Calu3 (cell line): ENCODE measurements at regions of chr12 and their contacts with region 1.

Region 1: DNA sequence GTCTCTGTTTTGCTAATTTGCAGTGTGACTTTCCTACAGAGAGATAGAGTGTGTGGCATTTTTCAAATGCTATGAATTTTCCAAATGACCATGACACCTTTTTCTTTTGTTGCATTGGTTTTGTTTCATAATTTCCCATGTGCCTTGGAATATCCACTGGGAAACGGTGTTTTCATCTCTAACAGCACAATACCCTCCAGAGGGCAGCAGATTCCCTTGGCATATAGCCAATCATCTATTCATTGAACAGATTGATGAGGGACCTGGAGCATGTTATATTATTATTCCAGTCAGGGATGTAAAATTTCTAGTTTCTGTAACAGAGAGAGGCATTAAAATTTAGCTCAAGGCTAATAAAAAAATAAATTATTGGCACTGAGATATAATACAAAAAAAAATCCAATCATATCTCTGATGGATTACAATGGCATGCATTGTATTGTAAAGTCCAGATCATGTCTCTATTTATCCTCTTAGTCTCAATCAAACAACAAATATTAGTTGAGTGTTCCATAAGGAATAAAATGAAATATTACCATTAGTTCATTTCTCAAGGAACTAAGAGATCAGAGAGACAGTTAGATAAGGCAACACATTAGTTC is 29.6 kb upstream of the NTN4 start:
- DNase-seq: peak; percentile 77
- H3K4me3 Mint-ChIP-seq: no peak overlapping the region
- H3K27ac Mint-ChIP-seq: no peak overlapping the region
- H3K4me1 Mint-ChIP-seq: no peaks in the 10 kb centered on the region
- H3K27me3 Mint-ChIP-seq: peaks cover 13% of the 10 kb centered on the region
- CTCF ChIP-seq: peak; percentile 38

Region 2: DNA sequence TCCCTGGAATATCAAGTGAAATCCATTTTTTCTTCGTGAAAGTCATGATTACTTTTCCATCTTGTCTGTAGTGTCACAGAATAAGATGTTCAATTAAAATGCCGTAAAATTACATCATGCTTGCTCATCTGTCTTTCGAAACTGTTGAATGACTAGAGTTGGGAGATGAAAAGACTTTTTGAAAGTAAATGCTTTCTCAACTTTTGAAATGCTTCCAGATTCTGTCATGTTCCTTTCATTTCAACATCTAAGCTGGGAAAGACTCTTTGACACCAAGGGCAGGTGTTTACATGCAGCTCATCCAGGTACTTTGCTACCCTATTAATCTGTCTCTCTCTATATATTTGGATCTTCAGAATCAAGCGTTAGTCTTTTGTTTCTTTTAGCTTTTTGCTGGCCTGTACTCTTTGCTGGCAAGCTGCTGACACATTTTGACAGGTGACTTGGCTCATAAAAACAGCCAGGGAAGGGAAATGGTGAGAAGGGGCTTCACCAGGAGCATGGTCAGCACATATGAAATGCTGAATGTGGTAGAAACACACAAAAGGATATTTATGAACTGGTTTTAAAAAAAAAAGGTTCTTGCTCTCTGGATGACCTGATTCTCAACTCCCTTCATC is 423.2 kb before region 1 on chr12:
- CTCF ChIA-PET with region 1: no interaction called
- intact Hi-C with region 1: no loop called
- DNase-seq: no peak
- H3K4me3 Mint-ChIP-seq: no peak overlapping the region
- H3K27ac Mint-ChIP-seq: no peak overlapping the region
- H3K4me1 Mint-ChIP-seq: no peaks in the 10 kb centered on the region
- H3K27me3 Mint-ChIP-seq: peaks cover 70% of the 10 kb centered on the region
- CTCF ChIP-seq: no peak

Region 3: GRCh38 chr12:95582230-95583058 is 237.8 kb before region 1 on chr12:
- CTCF ChIA-PET with region 1: interaction called, 5 read pairs
- intact Hi-C with region 1: loop called (anchors 1 kb)
- DNase-seq: peak; percentile 24
- H3K4me3 Mint-ChIP-seq: no peak overlapping the region
- H3K27ac Mint-ChIP-seq: no peak overlapping the region
- H3K4me1 Mint-ChIP-seq: peaks cover 12% of the 10 kb centered on the region
- H3K27me3 Mint-ChIP-seq: no peaks in the 10 kb centered on the region
- CTCF ChIP-seq: peak; percentile 34

Region 4: DNA sequence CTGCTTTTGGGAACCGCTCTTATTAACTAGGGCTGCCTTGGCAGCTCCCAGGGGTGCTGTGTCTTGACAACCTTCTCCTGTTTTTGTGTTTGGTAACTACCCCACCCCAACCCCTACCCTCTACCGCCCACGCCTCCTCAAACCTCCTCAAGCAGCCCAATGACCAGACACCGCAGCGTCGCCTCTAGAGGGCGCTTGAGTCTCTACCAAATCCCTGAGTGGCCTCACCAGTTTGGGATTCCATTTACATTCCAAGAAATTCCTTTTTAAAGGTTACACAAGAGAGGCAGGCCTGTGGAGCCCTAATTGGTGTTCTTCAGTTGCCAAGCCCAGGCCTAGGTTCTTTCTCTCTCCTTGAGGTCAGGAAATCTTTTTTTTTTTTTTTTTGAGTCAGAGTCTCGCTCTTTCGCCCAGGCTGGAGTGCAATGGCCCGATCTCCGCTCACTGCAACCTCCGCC is 196.6 kb before region 1 on chr12:
- CTCF ChIA-PET with region 1: no interaction called
- intact Hi-C with region 1: loop called (anchors 1 kb)
- DNase-seq: peak; percentile 78
- H3K4me3 Mint-ChIP-seq: no peak overlapping the region
- H3K27ac Mint-ChIP-seq: peak overlapping the region; percentile 96
- H3K4me1 Mint-ChIP-seq: peaks cover 40% of the 10 kb centered on the region
- H3K27me3 Mint-ChIP-seq: no peaks in the 10 kb centered on the region
- CTCF ChIP-seq: peak; percentile 50

Region 5: GRCh38 chr12:95789126-95790032 is 30.8 kb before region 1 on chr12:
- CTCF ChIA-PET with region 1: no interaction called
- intact Hi-C with region 1: loop called (anchors 2 kb)
- DNase-seq: peak; percentile 80
- H3K4me3 Mint-ChIP-seq: peak overlapping the region; percentile 97
- H3K27ac Mint-ChIP-seq: peak overlapping the region; percentile 87
- H3K4me1 Mint-ChIP-seq: peaks cover 70% of the 10 kb centered on the region
- H3K27me3 Mint-ChIP-seq: no peaks in the 10 kb centered on the region
- CTCF ChIP-seq: no peak

Region 6: DNA sequence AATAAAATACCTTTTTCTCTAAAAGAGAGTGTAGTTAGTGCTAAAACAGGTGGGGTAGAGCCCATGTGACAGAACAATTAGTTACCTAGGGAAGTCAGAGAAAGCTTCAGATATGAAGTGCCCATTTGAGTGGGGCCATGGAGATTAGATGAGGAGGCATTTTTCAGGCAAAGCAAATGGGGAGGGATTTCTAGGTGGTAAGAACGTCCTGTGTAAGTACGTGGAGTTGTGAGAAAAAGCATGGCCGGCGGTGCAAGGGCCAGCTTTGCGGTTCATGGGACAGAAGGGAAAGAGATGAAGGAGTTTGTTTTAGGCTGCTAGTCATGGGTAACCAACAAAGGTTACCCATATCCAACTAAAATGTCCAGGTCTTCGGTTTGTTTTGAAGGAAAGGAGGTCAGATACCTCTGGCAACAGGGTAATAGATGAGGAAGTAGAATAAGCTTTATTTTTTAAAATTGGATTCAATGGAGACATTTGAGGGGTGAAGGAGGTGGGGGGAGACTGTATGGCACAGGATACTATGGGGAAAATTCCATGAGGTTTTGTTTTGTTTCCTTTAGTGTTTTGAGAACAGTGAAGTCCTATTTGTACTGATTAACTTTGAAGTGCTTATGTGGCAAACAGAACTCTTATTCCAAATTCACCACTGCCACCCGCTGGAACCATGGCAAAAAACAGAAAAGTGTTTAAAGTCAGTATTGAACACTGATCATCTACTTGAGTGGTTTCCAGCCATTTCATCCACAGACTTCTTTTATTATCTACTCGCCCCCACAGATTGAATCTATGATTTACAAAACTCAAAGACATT is 28.6 kb after region 1 on chr12:
- CTCF ChIA-PET with region 1: interaction called, 3 read pairs
- intact Hi-C with region 1: loop called (anchors 1 kb)
- DNase-seq: peak; percentile 56
- H3K4me3 Mint-ChIP-seq: no peak overlapping the region
- H3K27ac Mint-ChIP-seq: peak overlapping the region; percentile 17
- H3K4me1 Mint-ChIP-seq: peaks cover 10% of the 10 kb centered on the region
- H3K27me3 Mint-ChIP-seq: peaks cover 17% of the 10 kb centered on the region
- CTCF ChIP-seq: no peak

Region 7: DNA sequence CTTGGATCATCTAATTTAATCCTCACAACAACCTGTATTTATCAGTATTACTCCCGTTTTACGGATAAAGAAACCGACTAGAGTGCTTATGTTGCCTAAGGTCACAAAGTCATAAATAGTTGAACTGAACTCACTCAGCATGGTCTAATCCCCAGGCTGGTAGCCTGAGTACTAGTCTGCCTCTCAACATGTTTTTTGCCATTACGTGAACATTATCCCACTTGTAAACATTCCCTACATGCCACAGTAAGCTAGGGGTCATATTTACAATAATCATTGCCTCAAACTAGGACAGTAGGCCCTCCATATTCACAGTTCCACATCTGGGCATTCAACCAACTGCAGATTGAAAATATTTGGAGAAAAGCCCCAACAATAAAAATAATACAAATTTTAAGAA is 50.7 kb after region 1 on chr12:
- CTCF ChIA-PET with region 1: no interaction called
- intact Hi-C with region 1: no loop called
- DNase-seq: no peak
- H3K4me3 Mint-ChIP-seq: no peak overlapping the region
- H3K27ac Mint-ChIP-seq: no peak overlapping the region
- H3K4me1 Mint-ChIP-seq: no peaks in the 10 kb centered on the region
- H3K27me3 Mint-ChIP-seq: no peaks in the 10 kb centered on the region
- CTCF ChIP-seq: no peak

Region 8: GRCh38 chr12:95998611-95999286 is 178.5 kb after region 1 on chr12:
- CTCF ChIA-PET with region 1: no interaction called
- intact Hi-C with region 1: loop called (anchors 5 kb)
- DNase-seq: peak; percentile 54
- H3K4me3 Mint-ChIP-seq: no peak overlapping the region
- H3K27ac Mint-ChIP-seq: no peak overlapping the region
- H3K4me1 Mint-ChIP-seq: peaks cover 33% of the 10 kb centered on the region
- H3K27me3 Mint-ChIP-seq: no peaks in the 10 kb centered on the region
- CTCF ChIP-seq: peak; percentile 46